Ovary (tissue), 10 donors: ENCODE measurements at regions of chr16 and their contacts with region 1.

Region 1: DNA sequence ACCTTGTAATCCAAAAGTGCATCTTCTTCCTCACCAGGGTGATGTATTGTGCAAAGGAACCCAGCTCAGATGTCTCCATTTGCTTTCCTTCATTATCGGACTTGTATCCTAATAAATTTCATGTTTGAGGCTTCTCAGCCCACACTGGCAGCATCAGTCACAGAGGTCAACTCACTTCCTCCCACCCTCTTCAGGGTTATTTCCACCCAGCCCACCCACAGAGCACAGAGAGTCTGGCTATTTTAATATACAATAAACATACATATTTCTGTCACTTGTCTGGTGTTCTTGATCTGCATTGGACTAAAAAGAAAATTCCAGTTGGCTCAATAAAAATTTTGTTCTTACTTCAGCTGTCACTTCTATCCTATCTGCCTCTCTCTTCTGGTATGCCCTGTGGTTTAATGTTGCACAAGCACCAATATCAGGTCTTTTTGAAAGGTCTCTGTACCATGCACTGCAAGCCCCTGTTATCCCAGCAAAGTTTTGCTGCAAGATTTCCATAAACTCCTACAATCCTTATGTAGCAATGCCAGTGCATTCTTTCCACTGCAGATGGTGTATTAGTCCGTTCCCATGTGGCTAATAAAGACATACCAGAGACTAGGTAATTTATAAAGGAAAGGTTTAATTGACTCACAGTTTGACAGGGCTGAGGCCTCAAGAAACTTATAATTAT is 201.8 kb downstream of the CDH11 start:
- DNase-seq: no peak
- H3K4me3 ChIP-seq: no peak overlapping the region
- H3K27ac ChIP-seq: no peak overlapping the region
- H3K4me1 ChIP-seq: no peaks in the 10 kb centered on the region
- H3K27me3 ChIP-seq: no peaks in the 10 kb centered on the region
- CTCF ChIP-seq: no peak
- EP300 ChIP-seq: no peak
- POLR2A ChIP-seq: no peak

Region 2: DNA sequence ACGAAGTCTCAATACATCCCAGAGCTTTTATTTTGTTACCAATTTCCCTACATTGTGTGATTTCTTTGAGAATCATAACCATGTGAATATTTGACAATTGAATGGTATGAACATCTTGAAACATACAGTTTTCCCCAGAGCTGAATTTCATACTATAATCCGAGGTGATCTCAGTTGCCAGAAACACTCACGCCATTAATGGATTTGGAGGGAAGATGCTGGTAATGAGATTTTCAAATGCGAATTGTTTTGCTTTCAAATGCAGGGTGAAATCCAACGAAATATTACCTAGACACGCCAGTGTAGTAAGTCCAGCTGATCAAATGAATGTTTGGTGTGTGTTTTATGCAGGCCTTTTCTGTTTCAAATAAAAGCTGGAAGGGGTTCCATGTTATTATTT is 1168.6 kb after region 1 on chr16:
- intact Hi-C with region 1: loop called in 1 of 4 experiments (anchors 5 kb)
- DNase-seq: no peak
- H3K4me3 ChIP-seq: no peak overlapping the region
- H3K27ac ChIP-seq: no peak overlapping the region
- H3K4me1 ChIP-seq: no peaks in the 10 kb centered on the region
- H3K27me3 ChIP-seq: no peaks in the 10 kb centered on the region
- CTCF ChIP-seq: no peak
- EP300 ChIP-seq: no peak
- POLR2A ChIP-seq: no peak